Activated CD8-positive, alpha-beta memory T cell treated with anti-CD3 and anti-CD28 coated beads, Interleukin-2, amount 10 ng/mL, durations not matched to agents 7 days and 5 days (primary cell): ENCODE measurements at regions of chr9 and their contacts with region 1.

Region 1: DNA sequence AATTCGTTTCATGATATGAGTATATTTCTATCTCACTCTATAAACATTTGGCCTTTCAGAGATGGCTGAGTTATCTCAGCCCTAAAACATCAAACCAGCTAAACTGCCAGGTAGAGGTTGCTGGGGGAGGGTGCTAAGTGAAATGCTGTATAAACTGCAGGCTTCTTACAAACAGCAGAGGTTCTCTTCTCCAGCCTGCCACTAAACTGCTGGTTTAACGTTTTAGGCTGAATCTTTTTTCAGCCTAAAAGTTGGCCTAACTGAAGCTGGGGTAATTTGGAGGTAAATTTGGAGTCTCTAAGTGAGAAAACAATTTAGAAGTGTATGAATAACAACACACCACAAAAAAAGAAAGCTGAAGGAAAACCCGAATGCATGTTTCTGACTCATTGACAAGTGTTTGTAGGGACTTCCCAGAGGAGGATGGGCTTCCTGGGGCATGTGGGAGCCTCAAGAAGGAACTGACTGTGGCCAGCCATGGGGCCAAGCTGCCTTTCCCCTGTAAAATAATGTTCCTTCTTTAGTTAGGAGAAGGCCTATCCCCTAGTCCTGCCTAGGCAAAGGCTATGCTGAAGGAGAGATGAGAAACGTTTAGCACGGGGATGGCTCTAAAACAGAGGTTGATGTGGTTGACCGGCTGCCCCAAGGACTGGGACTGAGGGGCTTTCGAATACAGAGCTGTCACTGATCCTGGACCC is 44.3 kb downstream of the SLC28A3 start:
- DNase-seq: peak; percentile 46
- ATAC-seq: peak; percentile 52
- H3K4me3 Mint-ChIP-seq: peak overlapping the region; percentile 30
- H3K27ac Mint-ChIP-seq: peak overlapping the region; percentile 85
- H3K4me1 Mint-ChIP-seq: peaks cover 60% of the 10 kb centered on the region
- H3K27me3 Mint-ChIP-seq: no peaks in the 10 kb centered on the region

Region 2: GRCh38 chr9:83986765-83987401 is 309.4 kb before region 1 on chr9:
- CTCF ChIA-PET with region 1: no interaction called
- DNase-seq: peak; percentile 49
- ATAC-seq: no peak
- H3K4me3 Mint-ChIP-seq: no peak overlapping the region
- H3K27ac Mint-ChIP-seq: peak overlapping the region; percentile 78
- H3K4me1 Mint-ChIP-seq: peaks cover 40% of the 10 kb centered on the region
- H3K27me3 Mint-ChIP-seq: no peaks in the 10 kb centered on the region

Region 3: GRCh38 chr9:84285381-84285780 is 10.9 kb before region 1 on chr9:
- CTCF ChIA-PET with region 1: interaction called, 19 read pairs
- DNase-seq: no peak
- ATAC-seq: no peak
- H3K4me3 Mint-ChIP-seq: no peak overlapping the region
- H3K27ac Mint-ChIP-seq: no peak overlapping the region
- H3K4me1 Mint-ChIP-seq: peaks cover 15% of the 10 kb centered on the region
- H3K27me3 Mint-ChIP-seq: no peaks in the 10 kb centered on the region

Region 4: DNA sequence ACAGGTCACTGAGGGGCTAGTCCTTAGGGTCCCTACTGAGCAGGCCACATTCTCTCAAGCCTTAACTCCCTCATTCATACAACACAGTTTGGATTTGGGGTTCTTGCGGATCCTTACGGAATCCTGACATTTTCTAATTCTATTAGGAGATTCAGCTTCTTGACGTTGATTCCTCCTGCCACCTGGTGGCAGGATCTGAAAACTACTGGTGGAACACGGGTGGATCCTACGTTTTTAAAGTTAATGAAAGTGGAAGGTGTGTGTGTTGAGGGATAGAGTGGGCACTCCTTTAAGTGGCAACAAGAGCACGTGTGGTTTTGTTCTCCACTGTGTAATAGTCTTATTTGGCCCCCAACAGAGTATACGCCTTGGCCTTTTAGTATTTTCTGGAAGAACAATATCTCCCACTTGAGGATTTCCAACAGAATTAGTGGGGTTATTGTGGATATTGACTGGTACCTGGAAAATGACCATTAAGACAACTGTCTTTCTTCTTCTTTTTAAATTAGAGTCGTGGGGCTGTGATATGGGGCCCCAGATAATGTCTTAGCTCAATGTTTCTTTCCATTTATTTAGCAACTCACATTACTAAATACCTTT is 19.1 kb after region 1 on chr9:
- CTCF ChIA-PET with region 1: interaction called, 14 read pairs
- DNase-seq: peak; percentile 64
- ATAC-seq: peak; percentile 53
- H3K4me3 Mint-ChIP-seq: no peak overlapping the region
- H3K27ac Mint-ChIP-seq: no peak overlapping the region
- H3K4me1 Mint-ChIP-seq: peaks cover 16% of the 10 kb centered on the region
- H3K27me3 Mint-ChIP-seq: no peaks in the 10 kb centered on the region